Heart left ventricle (tissue), 16 donors: ENCODE measurements at regions of chr7 and their contacts with region 1.

Region 1: DNA sequence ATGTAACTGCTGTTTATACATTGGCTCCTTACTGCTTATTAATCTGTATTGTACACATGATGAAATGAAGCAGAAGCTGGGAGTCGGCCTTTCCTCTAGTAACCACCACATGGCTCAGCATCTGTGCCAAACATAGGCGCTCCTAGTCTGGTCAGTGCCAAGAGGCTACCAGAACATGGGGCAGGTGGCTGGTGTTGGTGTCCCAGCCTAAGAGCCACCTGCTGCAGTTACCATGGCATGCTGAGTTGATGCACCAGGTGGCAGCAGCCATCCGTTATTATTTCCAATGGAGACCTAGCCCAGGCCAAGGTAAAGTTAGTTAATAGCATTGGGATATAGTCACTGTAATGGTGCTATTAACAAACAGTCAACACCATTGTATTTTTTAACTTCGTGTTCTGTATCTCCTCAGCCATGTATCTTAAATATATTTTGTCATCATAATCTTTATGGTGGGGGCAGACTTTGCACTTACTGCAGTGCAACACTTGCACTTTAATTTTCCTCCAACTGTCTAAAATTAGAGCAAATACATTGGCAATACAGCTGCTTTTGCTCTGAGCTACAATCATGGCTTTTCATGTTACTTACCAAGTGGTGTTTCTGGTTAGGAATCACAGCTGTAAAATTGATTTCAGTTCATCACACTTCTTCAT is 33.1 kb downstream of the HBP1 start:
- DNase-seq: peak; percentile 44 to 75 (median 66)
- ATAC-seq: peak; percentile 78 to 92 (median 92)
- H3K4me3 ChIP-seq: no peak overlapping the region
- H3K27ac ChIP-seq: peak overlapping the region in 8 of 12 donors; percentile 7 to 56 (median 38)
- H3K4me1 ChIP-seq: peaks cover 0 to 12% (median 2%) of the 10 kb centered on the region in 12 donors
- H3K27me3 ChIP-seq: no peaks in the 10 kb centered on the region
- CTCF ChIP-seq: peak; percentile 32 to 70 (median 56)
- POLR2A ChIP-seq: no peak

Region 2: GRCh38 chr7:106901828-106902441 is 300.0 kb before region 1 on chr7:
- intact Hi-C with region 1: no loop called
- DNase-seq: no peak
- ATAC-seq: no peak
- H3K4me3 ChIP-seq: no peak overlapping the region
- H3K27ac ChIP-seq: no peak overlapping the region
- H3K4me1 ChIP-seq: no peaks in the 10 kb centered on the region
- H3K27me3 ChIP-seq: no peaks in the 10 kb centered on the region
- CTCF ChIP-seq: no peak
- POLR2A ChIP-seq: no peak

Region 3: DNA sequence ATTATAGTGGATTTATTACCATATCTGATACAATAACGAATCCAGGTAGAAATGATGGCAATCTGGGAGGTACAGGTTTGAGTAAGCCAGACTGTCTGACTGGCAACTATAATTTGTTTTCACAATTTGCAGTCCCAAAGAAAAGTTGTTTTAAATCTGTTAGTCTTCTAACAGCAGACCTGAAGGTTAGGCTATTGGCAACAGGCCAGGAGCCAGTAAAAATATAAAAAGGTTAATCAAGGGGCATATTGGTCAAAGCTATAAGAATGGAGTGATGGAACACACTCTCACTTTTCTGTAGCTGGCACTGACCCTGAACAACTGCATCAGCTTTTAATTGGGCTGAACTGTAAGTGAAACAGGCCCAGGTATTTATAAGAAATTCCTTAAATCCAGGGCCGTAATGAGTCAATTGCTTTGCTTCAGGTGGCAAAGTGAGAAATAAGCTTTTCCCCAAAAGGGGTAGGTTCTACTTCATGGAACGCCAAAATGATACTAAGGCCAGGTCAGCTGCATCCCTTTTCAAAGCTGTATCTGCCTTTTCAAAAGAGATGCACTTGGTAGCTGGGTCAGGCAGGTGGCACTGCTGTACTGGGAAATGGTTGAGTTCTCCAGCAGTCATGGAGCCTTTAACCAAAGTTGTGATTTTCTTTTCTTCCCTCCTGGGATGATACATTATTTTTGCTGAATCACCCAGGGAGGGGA is 261.0 kb after region 1 on chr7:
- intact Hi-C with region 1: loop called in 6 of 10 experiments (anchors 2 to 10 kb)
- DNase-seq: peak in 4 of 5 donors; percentile 49 to 72 (median 59)
- ATAC-seq: peak; percentile 74 to 92 (median 91)
- H3K4me3 ChIP-seq: no peak overlapping the region
- H3K27ac ChIP-seq: peak overlapping the region in 10 of 12 donors; percentile 8 to 52 (median 36)
- H3K4me1 ChIP-seq: peaks cover 0 to 25% (median 1%) of the 10 kb centered on the region in 12 donors
- H3K27me3 ChIP-seq: no peaks in the 10 kb centered on the region
- CTCF ChIP-seq: peak; percentile 53 to 90 (median 78)
- POLR2A ChIP-seq: no peak

Region 4: DNA sequence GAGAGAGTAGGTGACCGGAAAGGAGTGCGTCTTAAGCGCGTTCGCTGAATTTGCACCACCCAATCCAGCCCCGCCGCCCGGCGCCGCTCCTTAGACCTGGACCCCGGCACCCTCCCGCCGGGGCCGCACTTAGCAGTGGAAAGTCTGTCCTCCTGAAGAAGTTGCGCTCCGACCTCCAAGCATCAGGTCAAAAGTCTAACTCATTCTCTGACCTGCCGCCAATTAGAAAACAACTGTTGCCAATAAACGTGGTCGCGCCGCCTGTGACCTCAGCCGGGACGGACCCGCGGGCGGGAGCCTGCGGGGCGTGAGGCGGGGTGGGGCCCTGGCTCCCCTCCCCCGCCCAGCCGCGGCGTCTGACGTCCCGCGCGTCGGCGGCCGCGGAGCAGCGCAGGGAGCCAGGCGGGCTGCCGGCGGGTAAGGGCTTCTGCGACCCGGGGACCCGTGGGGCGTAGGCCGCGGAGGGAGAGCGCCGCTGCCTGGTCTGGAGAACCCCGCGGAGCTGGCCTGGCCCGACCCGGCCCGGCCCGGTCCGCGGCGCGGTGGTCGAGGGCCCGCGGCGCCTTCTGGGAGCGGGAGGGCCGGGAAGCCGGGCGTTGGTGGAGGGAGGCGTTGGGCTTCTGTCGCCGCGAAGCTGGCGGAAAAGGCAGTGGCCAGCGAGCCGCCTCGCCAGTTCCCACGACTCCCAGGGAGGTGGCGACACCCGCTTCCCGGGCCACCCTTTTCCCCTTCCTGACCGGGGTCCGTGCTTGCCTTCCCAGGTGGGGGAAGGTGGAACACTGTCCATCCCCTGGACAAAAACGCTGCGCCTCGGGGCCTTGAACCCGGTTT is 378.2 kb after region 1 on chr7 and contains the start of gene BCAP29:
- intact Hi-C with region 1: loop called in 1 of 10 experiments (anchors 10 kb)
- DNase-seq: peak; percentile 85 to 91 (median 87)
- ATAC-seq: peak; percentile 84 to 98 (median 96)
- H3K4me3 ChIP-seq: peak within 1 kb of the TSS; percentile 74 to 89 (median 81)
- H3K27ac ChIP-seq: peak within 1 kb of the TSS; percentile 95 to 99 (median 97)
- H3K4me1 ChIP-seq: peaks cover 0 to 44% (median 26%) of the 10 kb centered on the region in 12 donors
- H3K27me3 ChIP-seq: no peaks in the 10 kb centered on the region
- CTCF ChIP-seq: peak in 9 of 12 donors; percentile 27 to 65 (median 48)
- POLR2A ChIP-seq: peak; percentile 71 to 90
- total RNA-seq, gene BCAP29: 96.2 to 241 (median 117) TPM

Region 5: GRCh38 chr7:107725151-107725740 is 523.3 kb after region 1 on chr7:
- intact Hi-C with region 1: loop called in 9 of 10 experiments (anchors 5 to 10 kb)
- DNase-seq: peak in 3 of 5 donors; percentile 31 to 45 (median 36)
- ATAC-seq: no peak
- H3K4me3 ChIP-seq: no peak overlapping the region
- H3K27ac ChIP-seq: no peak overlapping the region
- H3K4me1 ChIP-seq: no peaks in the 10 kb centered on the region
- H3K27me3 ChIP-seq: peaks cover 0 to 14% (median 0%) of the 10 kb centered on the region in 9 donors
- CTCF ChIP-seq: peak; percentile 61 to 83 (median 77)
- POLR2A ChIP-seq: no peak